ENCODE measurements at regions of chr10 and their contacts with region 1.

Region 1: GRCh38 chr10:100373298-100374136 is 26.5 kb downstream of the SCD start:
- DNase-seq: peak; percentile 85
- H3K4me3 Mint-ChIP-seq: no peak overlapping the region
- H3K27ac Mint-ChIP-seq: no peak overlapping the region
- H3K4me1 Mint-ChIP-seq: peaks cover 30% of the 10 kb centered on the region
- H3K27me3 Mint-ChIP-seq: no peaks in the 10 kb centered on the region

Region 2: DNA sequence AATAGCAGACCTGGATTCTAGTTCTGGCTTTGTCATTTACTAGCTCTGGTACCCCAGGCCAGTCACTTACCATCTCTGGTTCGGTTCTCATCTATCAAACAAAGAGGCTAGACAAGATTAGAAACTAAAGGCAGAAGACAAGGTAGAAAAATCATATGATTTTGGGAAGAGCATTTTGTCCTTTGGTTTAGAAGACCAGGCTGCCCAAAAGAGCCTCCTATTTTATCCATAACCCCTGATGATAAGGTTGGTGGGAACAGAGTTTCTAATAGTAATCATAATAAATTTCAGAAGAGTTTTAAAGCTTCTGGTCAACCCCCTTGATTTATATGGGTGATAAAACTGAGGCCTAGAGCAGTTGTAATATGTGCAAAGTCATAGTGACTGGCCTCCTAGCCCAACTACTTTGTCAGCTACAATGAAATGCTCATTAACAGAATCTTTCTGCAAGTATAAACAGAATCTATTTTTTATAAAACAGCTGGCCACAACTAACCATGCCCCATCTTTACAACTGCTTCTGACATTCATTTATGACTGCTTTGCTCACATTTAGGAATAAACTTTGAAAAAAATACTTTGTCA is 665.0 kb before region 1 on chr10:
- intact Hi-C with region 1: no loop called
- DNase-seq: no peak
- H3K4me3 Mint-ChIP-seq: no peak overlapping the region
- H3K27ac Mint-ChIP-seq: no peak overlapping the region
- H3K4me1 Mint-ChIP-seq: peaks cover 8% of the 10 kb centered on the region
- H3K27me3 Mint-ChIP-seq: no peaks in the 10 kb centered on the region

Region 3: DNA sequence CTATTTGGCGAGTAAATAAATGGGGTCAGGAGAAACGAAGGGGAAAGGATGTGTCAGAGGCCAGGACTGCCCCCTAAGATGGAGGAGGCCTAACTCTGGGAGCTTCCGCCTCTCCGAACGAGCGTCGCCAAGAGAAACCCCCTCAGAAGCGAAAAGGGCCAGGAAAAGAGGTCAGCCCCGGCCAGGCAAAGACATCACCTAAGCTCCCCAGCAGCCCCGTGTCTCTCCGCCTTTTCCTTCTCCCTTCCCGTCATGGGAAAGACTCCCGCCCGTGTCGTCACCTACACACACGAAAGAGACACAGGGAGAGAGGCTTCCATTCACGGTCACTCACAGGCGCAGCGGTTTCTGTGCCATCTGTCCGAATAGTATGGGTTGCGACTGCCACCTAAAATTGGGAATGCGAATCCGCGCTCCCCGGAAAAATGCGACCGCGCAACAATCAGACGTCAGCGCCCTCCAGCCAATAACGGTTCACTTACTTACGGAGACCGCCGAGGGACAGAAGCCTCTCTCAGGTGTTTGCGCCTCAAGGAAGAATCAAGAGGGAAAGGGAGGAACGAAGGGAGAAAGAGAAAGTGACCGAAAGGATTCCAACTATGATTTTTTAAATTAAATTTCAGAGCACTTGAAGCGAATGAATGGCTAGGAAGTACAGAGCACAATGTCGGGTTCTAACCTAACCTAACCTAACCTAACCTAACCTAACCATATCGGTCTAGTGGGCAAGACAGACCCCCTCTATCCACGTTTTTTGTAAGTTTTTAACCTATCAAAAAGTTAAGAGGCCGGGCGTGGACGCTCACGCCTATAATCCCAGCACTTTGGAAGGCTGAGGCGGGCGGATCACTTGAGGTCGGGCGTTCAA is 106.0 kb before region 1 on chr10 and contains the start of gene CWF19L1:
- intact Hi-C with region 1: loop called (anchors 1 kb)
- DNase-seq: peak; percentile 72
- H3K4me3 Mint-ChIP-seq: peak within 1 kb of the TSS; percentile 99
- H3K27ac Mint-ChIP-seq: peak within 1 kb of the TSS; percentile 95
- H3K4me1 Mint-ChIP-seq: peaks cover 20% of the 10 kb centered on the region
- H3K27me3 Mint-ChIP-seq: no peaks in the 10 kb centered on the region
- total RNA-seq, gene CWF19L1: 37.3 and 42.6 TPM in 2 replicates

Region 4: DNA sequence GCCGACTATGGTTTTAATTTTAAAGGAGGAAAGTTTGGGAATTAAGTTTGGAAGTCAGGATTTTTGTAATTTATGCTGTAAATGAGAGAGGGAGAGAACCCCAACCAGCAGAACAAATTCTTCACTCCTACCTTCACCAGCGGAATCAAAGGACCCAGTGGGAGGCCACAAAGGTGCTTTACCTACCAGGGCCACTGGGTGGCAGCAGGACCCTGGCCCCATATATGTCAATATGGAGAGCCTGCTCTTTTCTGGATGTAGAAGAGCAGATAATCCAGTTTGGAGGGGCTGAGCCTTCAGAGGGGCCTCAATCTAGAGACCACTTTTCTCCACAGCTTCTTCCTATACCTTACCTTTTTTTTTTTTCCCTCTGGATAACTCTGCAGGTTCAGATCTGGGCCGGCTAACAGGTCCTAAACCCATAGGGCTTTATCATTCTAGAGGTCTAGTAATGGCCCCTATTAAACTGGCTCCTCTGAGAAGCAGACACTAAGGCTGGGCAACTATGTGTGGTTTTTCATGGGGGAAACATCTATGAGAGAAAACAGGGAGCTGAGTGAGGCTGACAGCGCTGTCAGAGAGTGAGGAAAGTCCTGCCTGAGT is 35.0 kb before region 1 on chr10:
- intact Hi-C with region 1: loop called (anchors 1 kb)
- DNase-seq: peak; percentile 67
- H3K4me3 Mint-ChIP-seq: no peak overlapping the region
- H3K27ac Mint-ChIP-seq: no peak overlapping the region
- H3K4me1 Mint-ChIP-seq: peaks cover 35% of the 10 kb centered on the region
- H3K27me3 Mint-ChIP-seq: peaks cover 17% of the 10 kb centered on the region

Region 5: GRCh38 chr10:100391163-100392002 is 17.9 kb after region 1 on chr10:
- intact Hi-C with region 1: loop called (anchors 1 kb)
- DNase-seq: no peak
- H3K4me3 Mint-ChIP-seq: no peak overlapping the region
- H3K27ac Mint-ChIP-seq: no peak overlapping the region
- H3K4me1 Mint-ChIP-seq: peaks cover 13% of the 10 kb centered on the region
- H3K27me3 Mint-ChIP-seq: peaks cover 1% of the 10 kb centered on the region

Region 6: GRCh38 chr10:100508691-100509150 is 135.2 kb after region 1 on chr10:
- intact Hi-C with region 1: loop called (anchors 1 kb)
- DNase-seq: peak; percentile 50
- H3K4me3 Mint-ChIP-seq: peak overlapping the region; percentile 77
- H3K27ac Mint-ChIP-seq: peak overlapping the region; percentile 88
- H3K4me1 Mint-ChIP-seq: peaks cover 92% of the 10 kb centered on the region
- H3K27me3 Mint-ChIP-seq: no peaks in the 10 kb centered on the region

Region 7: GRCh38 chr10:100912605-100913469 is 539.3 kb after region 1 on chr10 and contains the start of gene SLF2:
- intact Hi-C with region 1: loop called (anchors 2 kb)
- DNase-seq: peak; percentile 94
- H3K4me3 Mint-ChIP-seq: peak within 1 kb of the TSS; percentile 97
- H3K27ac Mint-ChIP-seq: peak within 1 kb of the TSS; percentile 95
- H3K4me1 Mint-ChIP-seq: peaks cover 48% of the 10 kb centered on the region
- H3K27me3 Mint-ChIP-seq: no peaks in the 10 kb centered on the region
- total RNA-seq, gene SLF2: 33.4 and 36.1 TPM in 2 replicates

Region 8: GRCh38 chr10:101693978-101694673 is 1320.6 kb after region 1 on chr10:
- intact Hi-C with region 1: loop called (anchors 10 kb)
- DNase-seq: peak; percentile 70
- H3K4me3 Mint-ChIP-seq: peak overlapping the region; percentile 93
- H3K27ac Mint-ChIP-seq: peak overlapping the region; percentile 98
- H3K4me1 Mint-ChIP-seq: peaks cover 41% of the 10 kb centered on the region
- H3K27me3 Mint-ChIP-seq: no peaks in the 10 kb centered on the region